Naive thymus-derived CD4-positive, alpha-beta T cell (primary cell): ENCODE measurements at regions of chr7 and their contacts with region 1.

Region 1: DNA sequence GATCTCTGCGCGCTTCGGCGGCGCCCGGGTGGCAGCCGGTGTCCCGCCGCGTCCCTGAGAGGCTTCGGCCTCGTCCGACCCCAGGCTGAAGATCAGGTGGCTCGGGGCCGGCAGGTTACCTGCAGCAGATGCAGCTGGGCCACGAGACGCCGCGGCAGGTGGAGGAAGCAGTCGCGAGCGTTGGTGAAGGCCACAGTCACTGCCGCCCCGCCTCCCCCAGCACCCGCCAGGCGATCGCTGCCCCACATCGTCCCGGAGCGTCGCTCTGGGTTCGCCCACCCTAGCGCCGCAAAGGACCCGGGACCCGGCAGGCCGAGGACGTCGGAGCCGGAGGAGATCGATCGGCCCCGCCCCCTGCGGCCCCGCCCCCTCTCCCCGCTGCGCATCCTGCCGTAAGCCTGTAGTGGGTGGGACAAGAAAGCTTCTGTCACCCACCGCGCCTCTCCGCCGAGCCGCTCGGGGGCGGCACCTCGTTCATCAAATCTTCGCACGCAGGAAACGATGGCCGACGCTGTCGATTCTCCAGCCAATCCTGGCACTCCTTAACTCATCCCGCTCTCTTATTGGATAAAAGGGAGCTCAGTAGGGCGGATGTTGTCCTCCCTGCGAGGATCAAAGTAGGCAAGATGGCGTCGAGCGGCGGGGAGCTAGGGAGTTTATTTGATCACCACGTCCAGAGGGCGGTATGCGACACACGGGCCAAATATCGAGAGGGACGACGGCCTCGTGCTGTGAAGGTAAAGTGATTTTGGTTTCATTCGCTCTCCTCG is at the starts of genes PEX1 and RBM48:
- DNase-seq: peak; percentile 79 to 98 (median 96)
- ATAC-seq: peak; percentile 96
- H3K4me3 ChIP-seq: peak within 1 kb of the TSS; percentile 95
- H3K4me3 Mint-ChIP-seq: peak within 1 kb of the TSS; percentile 86 to 96 (median 90)
- H3K27ac ChIP-seq: peak within 1 kb of the TSS; percentile 91
- H3K27ac Mint-ChIP-seq: peak within 1 kb of the TSS; percentile 91 to 100 (median 95)
- H3K4me1 ChIP-seq: peaks cover 13 to 23% of the 10 kb centered on the region in 2 donors
- H3K4me1 Mint-ChIP-seq: peaks cover 24 to 67% (median 52%) of the 10 kb centered on the region in 7 donors
- H3K27me3 ChIP-seq: no peaks in the 10 kb centered on the region
- H3K27me3 Mint-ChIP-seq: peaks cover 0 to 2% (median 0%) of the 10 kb centered on the region in 5 donors
- total RNA-seq, gene PEX1: 18.6 to 43.3 (median 25.6) TPM
- total RNA-seq, gene RBM48: 16.9 to 42.7 (median 37.8) TPM

Region 2: DNA sequence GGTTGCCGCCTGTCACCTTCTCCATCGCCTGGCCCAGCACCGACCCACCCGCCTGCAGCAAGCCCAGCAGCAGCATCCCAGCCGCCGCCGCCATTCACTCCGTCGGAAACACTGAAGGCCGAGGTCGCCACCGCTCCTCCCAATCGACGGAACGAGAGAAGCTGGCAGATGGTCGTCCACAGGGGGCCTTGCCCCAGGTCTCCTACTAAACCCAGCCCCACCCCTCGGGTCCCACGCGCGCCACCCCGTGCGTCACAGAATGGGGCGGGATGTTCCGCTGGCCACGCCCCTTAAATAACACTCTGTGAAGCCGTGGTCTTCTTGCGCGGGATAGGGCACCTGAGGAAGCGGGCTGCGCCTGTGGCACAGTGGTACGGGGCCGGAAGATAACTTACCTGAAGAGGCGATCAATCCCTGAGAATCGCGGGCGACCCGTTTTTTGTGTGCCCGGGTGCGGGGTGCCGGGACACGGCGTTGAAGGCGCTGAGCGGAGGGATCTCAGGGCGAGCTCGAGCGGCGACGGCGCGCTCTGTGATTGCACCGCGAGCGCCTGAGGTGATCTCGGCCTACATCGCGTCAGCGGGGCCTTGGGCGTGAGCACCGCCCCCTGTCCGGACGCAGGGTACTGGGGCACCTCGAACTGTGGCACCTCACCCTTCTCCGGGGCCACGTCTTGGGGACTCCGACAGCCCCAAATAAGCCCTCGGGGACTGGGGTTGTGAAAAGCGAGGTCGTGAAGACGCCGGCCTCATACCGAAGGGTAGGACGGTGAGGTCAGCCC is 393.9 kb before region 1 on chr7 and contains the start of gene CYP51A1:
- CTCF ChIA-PET with region 1: no interaction called
- POLR2A ChIA-PET with region 1: interaction called, 7 read pairs
- intact Hi-C with region 1: loop called (anchors 1 kb)
- DNase-seq: peak; percentile 93 to 98 (median 96)
- ATAC-seq: peak; percentile 93
- H3K4me3 ChIP-seq: peak within 1 kb of the TSS; percentile 92
- H3K4me3 Mint-ChIP-seq: peak within 1 kb of the TSS; percentile 95 to 100 (median 98)
- H3K27ac ChIP-seq: peak within 1 kb of the TSS; percentile 94
- H3K27ac Mint-ChIP-seq: peak within 1 kb of the TSS; percentile 89 to 100 (median 99)
- H3K4me1 ChIP-seq: peaks cover 4 to 12% of the 10 kb centered on the region in 2 donors
- H3K4me1 Mint-ChIP-seq: peaks cover 12 to 49% (median 40%) of the 10 kb centered on the region in 7 donors
- H3K27me3 ChIP-seq: no peaks in the 10 kb centered on the region
- H3K27me3 Mint-ChIP-seq: peaks cover 0 to 2% (median 0%) of the 10 kb centered on the region in 5 donors
- total RNA-seq, gene CYP51A1: 14.7 to 36.6 (median 21.7) TPM

Region 3: GRCh38 chr7:92584996-92585395 is 56.6 kb after region 1 on chr7:
- CTCF ChIA-PET with region 1: no interaction called
- POLR2A ChIA-PET with region 1: interaction called, 20 read pairs
- intact Hi-C with region 1: loop called (anchors 1 kb)
- DNase-seq: peak in 5 of 9 donors; percentile 11 to 42 (median 23)
- ATAC-seq: peak; percentile 16
- H3K4me3 ChIP-seq: no peak overlapping the region
- H3K4me3 Mint-ChIP-seq: peak overlapping the region in 6 of 10 donors; percentile 7 to 61 (median 51)
- H3K27ac ChIP-seq: no peak overlapping the region
- H3K27ac Mint-ChIP-seq: peak overlapping the region in 5 of 9 donors; percentile 0 to 84 (median 70)
- H3K4me1 ChIP-seq: peaks cover 23 to 31% of the 10 kb centered on the region in 2 donors
- H3K4me1 Mint-ChIP-seq: peaks cover 40 to 89% (median 70%) of the 10 kb centered on the region in 7 donors
- H3K27me3 ChIP-seq: no peaks in the 10 kb centered on the region
- H3K27me3 Mint-ChIP-seq: no peaks in the 10 kb centered on the region

Region 4: GRCh38 chr7:92717993-92718716 is 189.8 kb after region 1 on chr7:
- CTCF ChIA-PET with region 1: no interaction called
- POLR2A ChIA-PET with region 1: no interaction called
- intact Hi-C with region 1: loop called in 1 of 2 experiments (anchors 2 kb)
- DNase-seq: peak in 8 of 9 donors; percentile 45 to 73 (median 62)
- ATAC-seq: peak; percentile 91
- H3K4me3 ChIP-seq: peak overlapping the region; percentile 62
- H3K4me3 Mint-ChIP-seq: peak overlapping the region; percentile 84 to 96 (median 94)
- H3K27ac ChIP-seq: peak overlapping the region; percentile 49
- H3K27ac Mint-ChIP-seq: peak overlapping the region; percentile 88 to 99 (median 96)
- H3K4me1 ChIP-seq: peaks cover 10 to 14% of the 10 kb centered on the region in 2 donors
- H3K4me1 Mint-ChIP-seq: peaks cover 26 to 73% (median 40%) of the 10 kb centered on the region in 7 donors
- H3K27me3 ChIP-seq: no peaks in the 10 kb centered on the region
- H3K27me3 Mint-ChIP-seq: no peaks in the 10 kb centered on the region

Region 5: GRCh38 chr7:93117852-93118530 is 589.6 kb after region 1 on chr7 and contains the start of gene SAMD9:
- CTCF ChIA-PET with region 1: no interaction called
- POLR2A ChIA-PET with region 1: interaction called, 4 read pairs
- intact Hi-C with region 1: loop called (anchors 1 kb)
- DNase-seq: peak in 8 of 9 donors; percentile 28 to 85 (median 78)
- ATAC-seq: peak; percentile 99
- H3K4me3 ChIP-seq: peak within 1 kb of the TSS; percentile 52
- H3K4me3 Mint-ChIP-seq: peak within 1 kb of the TSS; percentile 78 to 97 (median 92)
- H3K27ac ChIP-seq: peak within 1 kb of the TSS; percentile 82
- H3K27ac Mint-ChIP-seq: peak within 1 kb of the TSS; percentile 85 to 98 (median 93)
- H3K4me1 ChIP-seq: peaks cover 12 to 20% of the 10 kb centered on the region in 2 donors
- H3K4me1 Mint-ChIP-seq: peaks cover 38 to 56% (median 48%) of the 10 kb centered on the region in 7 donors
- H3K27me3 ChIP-seq: no peaks in the 10 kb centered on the region
- H3K27me3 Mint-ChIP-seq: no peaks in the 10 kb centered on the region
- total RNA-seq, gene SAMD9: 20.9 to 61.6 (median 47.8) TPM